ENCODE measurements at regions of chr7 and their contacts with region 1.

Region 1: DNA sequence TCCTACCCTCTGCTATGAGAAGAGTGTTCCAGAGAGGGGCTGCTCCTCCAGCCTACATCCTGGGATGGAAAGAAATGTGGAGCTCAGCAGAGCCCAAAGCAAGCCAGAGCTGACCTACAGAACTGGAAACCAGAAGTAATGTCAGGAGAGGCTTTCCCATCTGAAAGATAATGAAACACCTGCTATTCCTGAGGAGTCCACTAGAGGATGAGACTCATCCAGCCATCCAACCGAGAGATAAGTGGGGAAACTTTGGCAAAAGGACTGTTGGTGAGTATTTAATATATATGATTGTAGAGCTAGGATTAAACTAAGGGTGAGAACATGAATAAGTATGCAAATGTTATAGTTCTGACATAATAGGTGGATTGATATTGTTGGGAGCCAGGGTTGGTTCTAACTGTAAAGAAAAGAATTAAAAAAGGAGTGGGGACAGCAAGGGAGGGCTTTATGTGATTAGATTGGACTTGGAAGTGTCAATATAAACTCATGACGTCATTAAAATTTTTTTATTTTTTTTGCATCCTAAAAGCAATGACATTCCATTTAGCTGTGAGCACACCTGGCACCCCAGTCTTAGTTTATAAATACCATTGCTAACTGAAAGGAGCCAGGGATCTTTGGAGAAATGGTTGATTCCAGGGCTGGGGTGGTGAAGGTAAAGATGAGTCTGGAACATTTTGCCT is 312.8 kb upstream of the NFE2L3 start:
- DNase-seq: no peak
- ATAC-seq: no peak
- H3K4me3 ChIP-seq: no peak overlapping the region
- H3K27ac ChIP-seq: no peak overlapping the region
- H3K4me1 ChIP-seq: no peaks in the 10 kb centered on the region
- H3K27me3 ChIP-seq: no peaks in the 10 kb centered on the region; the same call in 1 of the 2 replicates
- CTCF ChIP-seq: peak; percentile 60

Region 2: GRCh38 chr7:25272265-25272664 is 567.0 kb before region 1 on chr7:
- CTCF ChIA-PET with region 1: no interaction called
- POLR2A ChIA-PET with region 1: no interaction called
- in situ Hi-C with region 1: no loop called
- intact Hi-C with region 1: loop called (anchors 10 kb)
- DNase-seq: no peak
- ATAC-seq: no peak
- H3K4me3 ChIP-seq: no peak overlapping the region
- H3K27ac ChIP-seq: no peak overlapping the region
- H3K4me1 ChIP-seq: no peaks in the 10 kb centered on the region
- H3K27me3 ChIP-seq: peaks cover 2% of the 10 kb centered on the region; the same call in 1 of the 2 replicates
- CTCF ChIP-seq: no peak

Region 3: GRCh38 chr7:26989897-26990670 is 1150.9 kb after region 1 on chr7:
- CTCF ChIA-PET with region 1: no interaction called
- POLR2A ChIA-PET with region 1: no interaction called
- in situ Hi-C with region 1: no loop called
- intact Hi-C with region 1: no loop called
- DNase-seq: no peak
- ATAC-seq: no peak
- H3K4me3 ChIP-seq: no peak overlapping the region
- H3K27ac ChIP-seq: no peak overlapping the region; the same call in 1 of the 2 replicates
- H3K4me1 ChIP-seq: no peaks in the 10 kb centered on the region
- H3K27me3 ChIP-seq: no peaks in the 10 kb centered on the region
- CTCF ChIP-seq: no peak

Measured in Panc1 (cell line).